ENCODE measurements at regions of chr12 and their contacts with region 1.

Region 1: GRCh38 chr12:16524413-16524812 is 81.5 kb downstream of the LMO3 start:
- DNase-seq: no peak
- ATAC-seq: no peak
- H3K4me3 ChIP-seq: no peak overlapping the region
- H3K27ac ChIP-seq: no peak overlapping the region
- H3K4me1 ChIP-seq: no peaks in the 10 kb centered on the region
- H3K27me3 ChIP-seq: no peaks in the 10 kb centered on the region
- CTCF ChIP-seq: no peak
- EP300 ChIP-seq: no peak
- POLR2A ChIP-seq: no peak
- RAD21 ChIP-seq: no peak

Region 2: GRCh38 chr12:16228067-16228466 is 296.3 kb before region 1 on chr12:
- CTCF ChIA-PET with region 1: no interaction called
- POLR2A ChIA-PET with region 1: no interaction called
- RAD21 ChIA-PET with region 1: no interaction called
- SMC1A ChIA-PET with region 1: no interaction called
- in situ Hi-C with region 1: no loop called
- intact Hi-C with region 1: no loop called
- DNase-seq: no peak
- ATAC-seq: peak; percentile 89
- H3K4me3 ChIP-seq: no peak overlapping the region
- H3K27ac ChIP-seq: no peak overlapping the region
- H3K4me1 ChIP-seq: no peaks in the 10 kb centered on the region
- H3K27me3 ChIP-seq: no peaks in the 10 kb centered on the region
- CTCF ChIP-seq: no peak
- EP300 ChIP-seq: no peak
- POLR2A ChIP-seq: no peak
- RAD21 ChIP-seq: no peak

Region 3: GRCh38 chr12:16504200-16504599 is 20.2 kb before region 1 on chr12:
- CTCF ChIA-PET with region 1: interaction called, 3 read pairs
- POLR2A ChIA-PET with region 1: interaction called, 3 read pairs
- RAD21 ChIA-PET with region 1: interaction called, 4 read pairs
- SMC1A ChIA-PET with region 1: interaction called, 10 read pairs
- in situ Hi-C with region 1: no loop called
- intact Hi-C with region 1: no loop called
- DNase-seq: no peak
- ATAC-seq: no peak
- H3K4me3 ChIP-seq: no peak overlapping the region
- H3K27ac ChIP-seq: no peak overlapping the region
- H3K4me1 ChIP-seq: no peaks in the 10 kb centered on the region
- H3K27me3 ChIP-seq: no peaks in the 10 kb centered on the region
- CTCF ChIP-seq: no peak
- EP300 ChIP-seq: no peak
- POLR2A ChIP-seq: no peak
- RAD21 ChIP-seq: no peak

Region 4: GRCh38 chr12:16568873-16569272 is 44.5 kb after region 1 on chr12:
- CTCF ChIA-PET with region 1: no interaction called
- POLR2A ChIA-PET with region 1: no interaction called
- RAD21 ChIA-PET with region 1: interaction called, 10 read pairs
- SMC1A ChIA-PET with region 1: interaction called, 8 read pairs
- in situ Hi-C with region 1: no loop called
- intact Hi-C with region 1: no loop called
- DNase-seq: peak; percentile 25
- ATAC-seq: peak; percentile 89
- H3K4me3 ChIP-seq: no peak overlapping the region
- H3K27ac ChIP-seq: no peak overlapping the region
- H3K4me1 ChIP-seq: no peaks in the 10 kb centered on the region
- H3K27me3 ChIP-seq: no peaks in the 10 kb centered on the region
- CTCF ChIP-seq: no peak
- EP300 ChIP-seq: 0 out of 4 replicates have a peak, but pooled peaks of 1 of the 2 experiments have one; percentile 22
- POLR2A ChIP-seq: no peak
- RAD21 ChIP-seq: no peak

Region 5: GRCh38 chr12:16583969-16584745 is 59.7 kb after region 1 on chr12:
- CTCF ChIA-PET with region 1: no interaction called
- POLR2A ChIA-PET with region 1: no interaction called
- RAD21 ChIA-PET with region 1: no interaction called
- SMC1A ChIA-PET with region 1: no interaction called
- in situ Hi-C with region 1: no loop called
- intact Hi-C with region 1: no loop called
- DNase-seq: no peak
- ATAC-seq: no peak
- H3K4me3 ChIP-seq: no peak overlapping the region
- H3K27ac ChIP-seq: no peak overlapping the region
- H3K4me1 ChIP-seq: no peaks in the 10 kb centered on the region
- H3K27me3 ChIP-seq: no peaks in the 10 kb centered on the region
- CTCF ChIP-seq: no peak
- EP300 ChIP-seq: no peak
- POLR2A ChIP-seq: no peak
- RAD21 ChIP-seq: no peak

Region 6: DNA sequence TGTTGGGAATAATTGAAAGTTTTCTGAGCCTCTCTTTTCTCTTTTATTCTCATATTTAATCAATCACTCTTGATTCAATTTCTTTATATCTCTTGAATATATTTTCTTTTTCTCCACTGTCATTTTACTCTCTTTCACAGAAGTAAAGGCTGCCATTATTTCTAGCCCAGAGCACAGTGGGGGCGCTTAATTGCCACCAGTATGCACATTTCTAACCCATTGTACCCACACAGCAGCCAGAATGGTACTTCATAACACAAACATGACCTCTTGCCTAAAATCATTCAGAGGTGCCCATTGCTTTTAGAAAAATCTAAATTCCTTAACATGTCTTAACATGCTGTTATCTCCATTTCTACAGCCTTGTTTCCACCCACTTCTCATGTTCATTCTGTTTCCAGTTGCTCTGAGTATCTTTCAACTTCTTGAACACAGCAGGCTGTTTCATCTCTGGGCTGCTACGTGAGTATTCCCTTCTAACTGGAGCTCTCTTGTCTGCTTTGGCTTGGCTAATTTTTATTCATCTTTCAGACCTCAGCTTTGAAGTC is 271.8 kb after region 1 on chr12:
- CTCF ChIA-PET with region 1: no interaction called
- POLR2A ChIA-PET with region 1: no interaction called
- RAD21 ChIA-PET with region 1: no interaction called
- SMC1A ChIA-PET with region 1: no interaction called
- in situ Hi-C with region 1: no loop called
- intact Hi-C with region 1: no loop called
- DNase-seq: no peak
- ATAC-seq: peak; percentile 21; the same call in 2 of the 3 replicates
- H3K4me3 ChIP-seq: no peak overlapping the region
- H3K27ac ChIP-seq: no peak overlapping the region
- H3K4me1 ChIP-seq: no peaks in the 10 kb centered on the region
- H3K27me3 ChIP-seq: no peaks in the 10 kb centered on the region
- CTCF ChIP-seq: no peak
- EP300 ChIP-seq: no peak
- POLR2A ChIP-seq: no peak
- RAD21 ChIP-seq: no peak

Region 7: GRCh38 chr12:17372508-17372907 is 848.1 kb after region 1 on chr12:
- CTCF ChIA-PET with region 1: no interaction called
- POLR2A ChIA-PET with region 1: no interaction called
- RAD21 ChIA-PET with region 1: no interaction called
- SMC1A ChIA-PET with region 1: no interaction called
- in situ Hi-C with region 1: no loop called
- intact Hi-C with region 1: no loop called
- DNase-seq: no peak
- ATAC-seq: no peak
- H3K4me3 ChIP-seq: no peak overlapping the region
- H3K27ac ChIP-seq: no peak overlapping the region
- H3K4me1 ChIP-seq: no peaks in the 10 kb centered on the region
- H3K27me3 ChIP-seq: no peaks in the 10 kb centered on the region
- CTCF ChIP-seq: no peak
- EP300 ChIP-seq: no peak
- POLR2A ChIP-seq: no peak
- RAD21 ChIP-seq: no peak